ENCODE measurements at regions of chr4 and their contacts with region 1.

Region 1: GRCh38 chr4:106266201-106266600 is 49.8 kb downstream of the TBCK start:
- DNase-seq: peak; percentile 52
- H3K4me3 Mint-ChIP-seq: no peak overlapping the region
- H3K27ac Mint-ChIP-seq: no peak overlapping the region
- H3K4me1 Mint-ChIP-seq: peaks cover 13% of the 10 kb centered on the region
- H3K27me3 Mint-ChIP-seq: no peaks in the 10 kb centered on the region
- CTCF ChIP-seq: peak; percentile 58

Region 2: GRCh38 chr4:106126062-106126461 is 140.1 kb before region 1 on chr4:
- CTCF ChIA-PET with region 1: no interaction called
- POLR2A ChIA-PET with region 1: no interaction called
- intact Hi-C with region 1: no loop called
- DNase-seq: no peak
- H3K4me3 Mint-ChIP-seq: no peak overlapping the region
- H3K27ac Mint-ChIP-seq: no peak overlapping the region
- H3K4me1 Mint-ChIP-seq: no peaks in the 10 kb centered on the region
- H3K27me3 Mint-ChIP-seq: no peaks in the 10 kb centered on the region
- CTCF ChIP-seq: no peak

Region 3: DNA sequence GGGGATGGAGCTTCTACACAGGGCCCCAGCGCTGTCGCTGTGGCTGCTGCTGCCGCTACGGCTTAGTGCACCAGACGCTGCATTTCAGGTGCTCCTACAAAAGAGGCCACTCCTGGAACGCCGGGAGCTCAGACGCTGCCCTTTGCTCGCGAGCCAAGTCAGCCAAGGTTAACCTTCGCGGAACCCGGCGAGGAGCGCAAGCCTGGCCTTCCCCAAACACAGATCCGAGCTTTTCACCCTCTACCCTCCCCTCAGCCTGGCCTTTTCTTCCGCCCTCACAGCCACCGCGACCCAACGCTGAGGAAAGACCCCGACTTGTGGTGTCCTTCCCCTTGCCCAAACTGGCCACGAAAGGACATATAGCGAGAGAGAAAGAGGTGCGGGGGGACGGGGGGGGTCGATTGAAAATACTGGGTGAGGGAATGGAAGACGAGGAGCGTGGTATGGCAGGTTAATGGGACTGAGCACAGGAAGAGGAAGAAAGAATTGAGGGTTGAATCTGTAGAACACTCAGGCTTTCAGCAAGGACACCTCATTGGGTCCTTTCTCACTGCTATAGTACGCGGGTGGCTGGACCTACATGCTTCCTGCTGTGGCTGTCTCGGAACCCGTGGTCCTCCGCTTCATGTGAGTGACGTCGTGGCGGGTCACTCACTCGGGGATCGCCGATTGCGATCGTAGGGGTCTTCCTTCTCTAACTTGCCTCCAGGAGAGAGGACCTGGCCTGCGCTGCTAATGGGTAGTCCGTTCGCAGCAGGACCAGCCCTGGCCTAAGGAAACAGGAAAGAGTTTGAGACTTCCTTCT is 50.0 kb after region 1 on chr4 and contains the starts of genes AIMP1 and TBCK:
- CTCF ChIA-PET with region 1: no interaction called
- POLR2A ChIA-PET with region 1: interaction called, 13 read pairs
- intact Hi-C with region 1: loop called (anchors 2 kb)
- DNase-seq: peak; percentile 91
- H3K4me3 Mint-ChIP-seq: no peak within 1 kb of the TSS
- H3K27ac Mint-ChIP-seq: no peak within 1 kb of the TSS
- H3K4me1 Mint-ChIP-seq: peaks cover 25% of the 10 kb centered on the region
- H3K27me3 Mint-ChIP-seq: no peaks in the 10 kb centered on the region
- CTCF ChIP-seq: no peak
- total RNA-seq, gene AIMP1: 103 and 126 TPM in 2 replicates
- total RNA-seq, gene TBCK: 27.8 and 33.2 TPM in 2 replicates

Region 4: DNA sequence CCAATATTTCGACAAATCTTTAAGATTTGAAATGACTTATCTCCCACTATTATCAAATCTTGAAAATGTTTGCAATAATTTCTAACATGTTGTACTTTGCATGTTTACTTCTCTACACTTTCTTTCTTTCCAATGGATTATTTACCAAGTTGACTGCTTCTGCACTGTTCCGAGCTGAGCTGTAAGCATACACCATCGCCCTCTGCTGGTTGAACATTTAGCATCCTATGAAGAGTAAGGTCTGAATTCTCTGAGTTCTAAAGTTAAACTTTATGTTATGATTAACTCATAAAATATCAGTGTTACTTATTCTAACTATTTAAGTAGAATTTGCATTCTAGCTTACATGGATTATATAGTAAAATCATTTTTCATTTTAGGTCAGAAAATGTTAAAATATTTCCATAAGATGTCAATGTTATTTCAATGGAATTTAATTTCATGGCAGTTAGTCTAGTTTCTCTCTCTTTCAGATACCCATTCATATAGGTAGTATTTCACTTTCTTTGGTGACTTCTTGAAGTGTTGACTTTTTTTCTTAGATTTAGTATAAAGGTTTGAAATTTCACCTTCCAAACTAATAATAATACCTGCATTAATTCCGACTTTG is 632.5 kb after region 1 on chr4:
- CTCF ChIA-PET with region 1: no interaction called
- POLR2A ChIA-PET with region 1: no interaction called
- intact Hi-C with region 1: loop called (anchors 1 kb)
- DNase-seq: peak; percentile 71
- H3K4me3 Mint-ChIP-seq: no peak overlapping the region
- H3K27ac Mint-ChIP-seq: no peak overlapping the region
- H3K4me1 Mint-ChIP-seq: no peaks in the 10 kb centered on the region
- H3K27me3 Mint-ChIP-seq: no peaks in the 10 kb centered on the region
- CTCF ChIP-seq: peak; percentile 72

Measured in MCF 10A (cell line).